ENCODE measurements at regions of chr3 and their contacts with region 1.

Region 1: DNA sequence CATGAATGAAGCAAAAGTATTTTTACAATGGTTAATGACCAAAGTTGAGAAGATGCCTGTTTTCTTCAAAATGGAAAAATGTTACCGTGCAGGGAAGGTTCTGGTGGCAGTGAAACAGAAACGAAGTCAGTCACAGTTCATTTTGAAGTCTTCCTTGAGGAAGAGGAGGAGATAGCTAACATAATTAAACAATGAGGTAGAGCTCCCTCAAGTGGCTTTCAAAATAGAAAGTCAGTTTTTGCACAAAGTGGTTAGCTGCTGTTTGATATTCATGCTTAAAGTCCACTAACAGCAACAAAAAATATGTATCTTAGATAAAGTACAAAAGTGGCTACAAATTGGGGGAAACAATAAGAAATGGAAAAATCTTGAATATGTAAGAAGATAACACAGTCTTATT is 87.3 kb downstream of the TFG start:
- DNase-seq: no peak
- ATAC-seq: no peak
- H3K4me3 ChIP-seq: no peak overlapping the region
- H3K27ac ChIP-seq: no peak overlapping the region
- H3K4me1 ChIP-seq: peaks cover 0 to 9% (median 0%) of the 10 kb centered on the region in 12 donors
- H3K27me3 ChIP-seq: no peaks in the 10 kb centered on the region
- CTCF ChIP-seq: peak in 9 of 12 donors; percentile 12 to 46 (median 35)
- POLR2A ChIP-seq: no peak

Region 2: GRCh38 chr3:100463002-100463401 is 333.6 kb before region 1 on chr3:
- intact Hi-C with region 1: loop called in 3 of 10 experiments (anchors 5 to 10 kb)
- DNase-seq: peak in 1 of 5 donors; percentile 10
- ATAC-seq: peak in 3 of 4 donors; percentile 77 to 89 (median 85)
- H3K4me3 ChIP-seq: no peak overlapping the region
- H3K27ac ChIP-seq: no peak overlapping the region
- H3K4me1 ChIP-seq: peaks cover 0 to 9% (median 0%) of the 10 kb centered on the region in 12 donors
- H3K27me3 ChIP-seq: no peaks in the 10 kb centered on the region
- CTCF ChIP-seq: peak; percentile 47 to 79 (median 62)
- POLR2A ChIP-seq: no peak

Region 3: GRCh38 chr3:100600181-100601042 is 196.1 kb before region 1 on chr3:
- intact Hi-C with region 1: no loop called
- DNase-seq: no peak
- ATAC-seq: no peak
- H3K4me3 ChIP-seq: no peak overlapping the region
- H3K27ac ChIP-seq: no peak overlapping the region
- H3K4me1 ChIP-seq: peaks cover 0 to 20% (median 0%) of the 10 kb centered on the region in 12 donors
- H3K27me3 ChIP-seq: no peaks in the 10 kb centered on the region
- CTCF ChIP-seq: no peak
- POLR2A ChIP-seq: no peak

Region 4: GRCh38 chr3:100737334-100737733 is 59.2 kb before region 1 on chr3:
- intact Hi-C with region 1: loop called in 1 of 10 experiments (anchors 10 kb)
- DNase-seq: no peak
- ATAC-seq: no peak
- H3K4me3 ChIP-seq: no peak overlapping the region
- H3K27ac ChIP-seq: no peak overlapping the region
- H3K4me1 ChIP-seq: peaks cover 0 to 32% (median 5%) of the 10 kb centered on the region in 12 donors
- H3K27me3 ChIP-seq: no peaks in the 10 kb centered on the region
- CTCF ChIP-seq: peak in 10 of 12 donors; percentile 9 to 50 (median 34)
- POLR2A ChIP-seq: no peak

Region 5: GRCh38 chr3:101061312-101061711 is 264.8 kb after region 1 on chr3:
- intact Hi-C with region 1: no loop called
- DNase-seq: no peak
- ATAC-seq: no peak
- H3K4me3 ChIP-seq: no peak overlapping the region
- H3K27ac ChIP-seq: no peak overlapping the region
- H3K4me1 ChIP-seq: peaks cover 0 to 17% (median 0%) of the 10 kb centered on the region in 12 donors
- H3K27me3 ChIP-seq: no peaks in the 10 kb centered on the region
- CTCF ChIP-seq: no peak
- POLR2A ChIP-seq: no peak